ENCODE measurements at regions of chr18 and their contacts with region 1.

Region 1: GRCh38 chr18:76620321-76621170 is 125.5 kb upstream of the ZNF516 start:
- DNase-seq: peak; percentile 53 to 80 (median 66)
- ATAC-seq: peak; percentile 69 to 86 (median 84)
- H3K4me3 ChIP-seq: peak overlapping the region in 11 of 12 donors; percentile 10 to 63 (median 48)
- H3K27ac ChIP-seq: peak overlapping the region in 10 of 12 donors; percentile 38 to 74 (median 67)
- H3K4me1 ChIP-seq: peaks cover 0 to 25% (median 14%) of the 10 kb centered on the region in 12 donors
- H3K27me3 ChIP-seq: no peaks in the 10 kb centered on the region
- CTCF ChIP-seq: peak; percentile 41 to 74 (median 60)
- POLR2A ChIP-seq: no peak

Region 2: DNA sequence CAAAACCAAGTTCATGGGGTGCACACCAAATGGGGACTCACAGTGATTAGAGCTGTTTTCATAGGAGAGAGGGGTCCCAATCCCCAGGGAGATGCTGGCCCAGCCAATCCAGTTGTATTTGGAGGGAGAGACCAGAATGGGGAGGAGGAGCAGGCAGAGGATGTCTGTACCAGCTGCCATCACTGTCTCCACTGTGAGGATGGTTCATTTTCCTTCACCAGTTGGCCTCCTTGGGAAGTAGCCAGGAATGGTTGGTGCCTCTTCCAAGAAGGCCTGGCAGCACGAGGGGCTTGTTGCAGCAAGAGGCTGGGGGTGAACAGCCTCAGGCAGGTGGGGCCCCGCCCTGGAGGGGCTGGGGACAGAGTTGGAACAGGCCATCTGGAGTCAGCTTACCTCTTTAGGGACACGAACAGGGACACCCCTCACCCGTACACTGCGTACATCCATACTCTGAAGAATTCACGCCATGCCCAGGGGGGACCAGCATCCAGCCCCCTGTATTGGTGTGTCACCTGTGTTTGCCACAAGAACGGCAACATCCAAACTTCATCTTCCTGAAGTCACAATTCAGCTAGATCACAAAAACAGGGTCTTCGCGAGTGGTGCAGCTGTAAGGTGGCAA is 40.1 kb after region 1 on chr18:
- intact Hi-C with region 1: no loop called
- DNase-seq: no peak
- ATAC-seq: no peak
- H3K4me3 ChIP-seq: no peak overlapping the region
- H3K27ac ChIP-seq: no peak overlapping the region
- H3K4me1 ChIP-seq: no peaks in the 10 kb centered on the region
- H3K27me3 ChIP-seq: peaks cover 0 to 28% (median 7%) of the 10 kb centered on the region in 9 donors
- CTCF ChIP-seq: no peak
- POLR2A ChIP-seq: no peak

Region 3: DNA sequence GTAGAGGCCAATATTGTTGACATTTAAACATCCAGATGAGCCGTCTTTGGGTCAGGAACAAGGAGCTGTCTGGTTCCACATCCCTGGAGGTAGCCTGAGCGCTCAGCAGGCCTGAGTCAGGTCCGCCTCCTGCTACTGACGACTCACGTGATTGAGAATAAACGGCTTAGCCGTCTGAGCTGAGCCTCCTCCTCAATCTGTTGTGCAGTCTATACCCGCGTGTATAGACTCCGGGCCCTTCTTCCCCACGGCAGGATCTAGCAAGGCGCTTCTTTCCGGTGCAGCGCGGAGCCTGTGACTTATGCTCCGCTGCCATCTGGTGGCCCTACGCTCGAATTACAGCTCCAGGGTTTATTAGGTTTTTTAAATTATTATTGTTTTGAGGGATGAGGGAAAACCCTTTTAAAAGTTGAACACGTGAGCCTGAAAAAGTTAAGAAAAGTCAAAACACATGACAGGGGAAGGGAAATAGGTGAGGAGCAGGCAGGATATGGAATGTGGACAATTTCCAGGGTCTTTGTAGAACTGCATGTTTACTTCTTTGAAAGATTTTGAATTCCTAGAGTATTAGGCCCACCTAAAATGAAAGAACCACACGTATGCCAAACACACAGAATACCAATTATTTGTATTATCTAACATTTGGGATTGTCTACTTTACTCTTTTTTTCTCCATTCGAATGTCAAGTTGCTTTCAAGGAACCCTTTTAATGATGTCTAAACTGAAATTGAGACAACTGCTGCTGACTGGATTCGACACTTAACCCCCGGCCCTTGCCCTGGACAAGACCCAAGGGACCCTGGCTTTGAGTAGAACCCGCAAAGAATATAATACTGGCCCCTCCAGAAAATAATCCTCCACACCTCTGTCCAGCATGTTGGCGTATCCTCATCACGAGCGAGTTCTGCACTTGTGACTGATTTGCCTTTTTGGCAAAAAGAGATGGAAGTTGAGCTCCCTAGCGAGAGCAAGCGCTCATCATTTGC is 89.4 kb after region 1 on chr18:
- intact Hi-C with region 1: loop called in 1 of 10 experiments (anchors 2 kb)
- DNase-seq: peak; percentile 41 to 79 (median 64)
- ATAC-seq: peak; percentile 61 to 91 (median 83)
- H3K4me3 ChIP-seq: peak overlapping the region in 2 of 12 donors; percentile 7 to 22
- H3K27ac ChIP-seq: no peak overlapping the region
- H3K4me1 ChIP-seq: peaks cover 0 to 7% (median 0%) of the 10 kb centered on the region in 12 donors
- H3K27me3 ChIP-seq: no peaks in the 10 kb centered on the region
- CTCF ChIP-seq: peak; percentile 84 to 94 (median 90)
- POLR2A ChIP-seq: no peak

Region 4: DNA sequence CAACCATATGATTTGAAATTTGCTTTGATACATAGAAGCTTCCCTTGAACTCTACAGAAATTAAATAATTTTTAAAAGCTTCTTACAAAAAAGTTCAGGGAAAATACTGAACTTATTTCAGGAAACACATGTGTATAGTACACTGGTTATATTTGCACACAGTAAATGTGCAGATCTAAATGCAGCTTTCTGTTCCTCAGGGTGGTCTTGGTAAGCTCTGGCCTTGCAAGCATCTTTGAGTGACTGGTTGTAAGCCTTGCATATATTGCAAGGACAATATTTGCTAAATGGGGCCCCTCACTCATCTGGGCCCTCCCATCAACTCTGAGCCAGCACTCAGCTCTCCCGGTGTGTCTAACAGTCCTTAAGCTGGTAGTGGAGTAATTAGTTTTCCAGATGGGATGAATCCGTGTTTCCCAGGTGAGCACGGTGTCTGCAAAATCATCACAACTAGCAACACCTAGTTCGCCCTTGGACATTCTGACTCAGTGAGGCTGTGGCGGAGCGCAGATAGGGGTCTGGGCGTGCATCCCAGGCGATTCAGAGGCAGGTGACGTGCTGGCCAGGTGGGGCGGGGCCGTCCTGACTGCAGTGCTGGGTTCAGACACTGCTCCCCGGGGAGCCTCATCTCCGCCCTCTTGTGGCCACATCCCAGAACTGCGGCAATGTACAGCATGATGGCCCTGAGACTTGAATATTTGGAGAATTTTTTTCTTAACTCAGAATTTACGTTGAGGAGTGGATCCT is 362.5 kb after region 1 on chr18:
- intact Hi-C with region 1: no loop called
- DNase-seq: peak; percentile 58 to 90 (median 78)
- ATAC-seq: peak; percentile 64 to 84 (median 78)
- H3K4me3 ChIP-seq: no peak overlapping the region
- H3K27ac ChIP-seq: no peak overlapping the region
- H3K4me1 ChIP-seq: peaks cover 0 to 16% (median 2%) of the 10 kb centered on the region in 12 donors
- H3K27me3 ChIP-seq: no peaks in the 10 kb centered on the region
- CTCF ChIP-seq: peak; percentile 74 to 95 (median 90)
- POLR2A ChIP-seq: no peak